CD4-positive, alpha-beta T cell (primary cell): ENCODE measurements at regions of chr17 and their contacts with region 1.

Region 1: GRCh38 chr17:58121925-58122324 is 26.3 kb upstream of the OR4D1 start:
- DNase-seq: peak in 13 of 14 experiments; percentile 3 to 82 (median 38)
- ATAC-seq: peak; percentile 87
- H3K4me3 ChIP-seq: no peak overlapping the region
- H3K4me3 Mint-ChIP-seq: no peak overlapping the region
- H3K27ac ChIP-seq: no peak overlapping the region
- H3K27ac Mint-ChIP-seq: no peak overlapping the region
- H3K4me1 ChIP-seq: no peaks in the 10 kb centered on the region
- H3K4me1 Mint-ChIP-seq: peaks cover 15% of the 10 kb centered on the region
- H3K27me3 ChIP-seq: peaks cover 0 to 2% of the 10 kb centered on the region in 2 experiments
- H3K27me3 Mint-ChIP-seq: peaks cover 9% of the 10 kb centered on the region
- CTCF ChIP-seq: peak; percentile 82

Region 2: GRCh38 chr17:58156839-58157803 is 35.2 kb after region 1 on chr17:
- CTCF ChIA-PET with region 1: interaction called, 3 read pairs
- POLR2A ChIA-PET with region 1: interaction called, 13 read pairs
- intact Hi-C with region 1: no loop called
- DNase-seq: peak; percentile 28 to 82 (median 45)
- ATAC-seq: peak; percentile 50
- H3K4me3 ChIP-seq: peak overlapping the region; percentile 76
- H3K4me3 Mint-ChIP-seq: peak overlapping the region; percentile 91
- H3K27ac ChIP-seq: peak overlapping the region; percentile 75 to 86
- H3K27ac Mint-ChIP-seq: peak overlapping the region; percentile 92
- H3K4me1 ChIP-seq: peaks cover 55% of the 10 kb centered on the region
- H3K4me1 Mint-ChIP-seq: peaks cover 84% of the 10 kb centered on the region
- H3K27me3 ChIP-seq: no peaks in the 10 kb centered on the region
- H3K27me3 Mint-ChIP-seq: no peaks in the 10 kb centered on the region
- CTCF ChIP-seq: no peak